Psoas muscle (tissue), 8 donors: ENCODE measurements at regions of chr1 and their contacts with region 1.

Region 1: DNA sequence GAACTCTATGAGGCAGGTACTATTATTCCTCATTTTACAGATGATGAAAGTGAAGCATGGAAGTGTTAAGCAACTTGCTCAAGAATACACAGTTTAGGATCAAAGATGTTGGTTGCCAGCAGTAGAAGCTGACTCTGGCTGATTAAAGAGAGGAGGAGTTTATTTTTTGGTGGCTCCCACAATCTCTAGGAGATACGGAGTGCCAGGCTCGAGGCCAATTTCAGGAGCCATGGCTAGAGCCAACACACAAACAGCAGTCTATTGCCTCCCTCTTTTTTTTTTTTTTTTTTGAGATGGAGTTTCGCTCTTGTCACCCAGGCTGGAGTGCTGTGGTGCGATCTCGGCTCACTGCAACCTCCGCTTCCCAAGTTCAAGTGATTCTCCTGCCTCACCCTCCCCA is 19.6 kb downstream of the TTF2 start:
- DNase-seq: no peak
- ATAC-seq: no peak
- H3K4me3 ChIP-seq: no peak overlapping the region
- H3K27ac ChIP-seq: no peak overlapping the region
- H3K4me1 ChIP-seq: no peaks in the 10 kb centered on the region
- H3K27me3 ChIP-seq: no peaks in the 10 kb centered on the region
- CTCF ChIP-seq: no peak

Region 2: GRCh38 chr1:117110774-117111173 is 31.0 kb after region 1 on chr1:
- intact Hi-C with region 1: loop called in 1 of 2 experiments (anchors 5 kb)
- DNase-seq: no peak
- ATAC-seq: peak in 1 of 4 donors; percentile 59
- H3K4me3 ChIP-seq: no peak overlapping the region
- H3K27ac ChIP-seq: peak overlapping the region; percentile 54
- H3K4me1 ChIP-seq: peaks cover 3% of the 10 kb centered on the region
- H3K27me3 ChIP-seq: no peaks in the 10 kb centered on the region
- CTCF ChIP-seq: no peak